Cardiac septum (tissue), 1 donor: ENCODE measurements at regions of chr12 and their contacts with region 1.

Region 1: GRCh38 chr12:94149119-94149780 is 873 bp downstream of the PLXNC1 start:
- DNase-seq: peak; percentile 81

Region 2: GRCh38 chr12:93990832-93991803 is 158.1 kb before region 1 on chr12:
- intact Hi-C with region 1: no loop called
- DNase-seq: no peak

Region 3: GRCh38 chr12:94074980-94075928 is 74.0 kb before region 1 on chr12:
- intact Hi-C with region 1: no loop called
- DNase-seq: no peak

Region 4: DNA sequence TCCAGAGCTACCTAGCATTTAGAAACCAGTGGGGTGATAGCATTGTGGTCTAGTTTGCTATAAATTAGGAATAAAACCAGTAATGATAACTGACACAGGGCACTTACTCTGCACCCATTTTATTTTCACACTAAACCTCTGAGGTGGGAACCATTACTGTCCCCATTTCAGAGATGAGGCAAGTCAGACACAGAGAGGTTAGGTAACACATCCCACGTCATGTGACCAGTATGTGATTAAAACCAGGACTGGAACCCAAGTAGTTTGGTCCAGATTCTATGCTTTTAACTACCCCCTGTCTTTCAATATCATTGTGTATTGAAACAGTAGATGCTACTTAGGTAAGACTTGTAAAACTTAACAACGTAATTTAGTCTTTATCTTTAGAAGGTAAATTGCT is 109.3 kb after region 1 on chr12:
- intact Hi-C with region 1: loop called (anchors 5 kb)
- DNase-seq: no peak

Region 5: DNA sequence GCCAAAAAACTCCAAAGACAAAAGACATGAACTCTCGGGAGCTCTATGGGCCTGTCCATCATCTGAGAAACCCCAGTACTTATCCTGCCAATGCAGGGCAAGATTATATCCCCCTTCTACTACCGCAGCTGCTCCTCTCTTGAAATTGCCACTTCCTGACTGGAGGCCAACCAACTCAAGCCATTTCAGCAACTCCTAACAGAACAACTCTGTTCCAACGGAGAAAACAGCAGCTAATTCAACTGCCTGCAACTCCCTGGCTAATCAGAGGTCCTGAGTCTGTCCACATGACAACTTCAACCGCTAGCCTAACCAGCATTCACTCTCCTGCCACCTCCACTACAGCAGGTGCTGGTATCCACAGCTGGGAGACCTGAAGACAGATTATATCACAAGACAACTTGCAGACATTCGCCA is 286.3 kb after region 1 on chr12:
- intact Hi-C with region 1: loop called (anchors 2 kb)
- DNase-seq: no peak

Region 6: GRCh38 chr12:94532490-94533422 is 383.5 kb after region 1 on chr12:
- intact Hi-C with region 1: loop called (anchors 5 kb)
- DNase-seq: peak; percentile 77

Region 7: DNA sequence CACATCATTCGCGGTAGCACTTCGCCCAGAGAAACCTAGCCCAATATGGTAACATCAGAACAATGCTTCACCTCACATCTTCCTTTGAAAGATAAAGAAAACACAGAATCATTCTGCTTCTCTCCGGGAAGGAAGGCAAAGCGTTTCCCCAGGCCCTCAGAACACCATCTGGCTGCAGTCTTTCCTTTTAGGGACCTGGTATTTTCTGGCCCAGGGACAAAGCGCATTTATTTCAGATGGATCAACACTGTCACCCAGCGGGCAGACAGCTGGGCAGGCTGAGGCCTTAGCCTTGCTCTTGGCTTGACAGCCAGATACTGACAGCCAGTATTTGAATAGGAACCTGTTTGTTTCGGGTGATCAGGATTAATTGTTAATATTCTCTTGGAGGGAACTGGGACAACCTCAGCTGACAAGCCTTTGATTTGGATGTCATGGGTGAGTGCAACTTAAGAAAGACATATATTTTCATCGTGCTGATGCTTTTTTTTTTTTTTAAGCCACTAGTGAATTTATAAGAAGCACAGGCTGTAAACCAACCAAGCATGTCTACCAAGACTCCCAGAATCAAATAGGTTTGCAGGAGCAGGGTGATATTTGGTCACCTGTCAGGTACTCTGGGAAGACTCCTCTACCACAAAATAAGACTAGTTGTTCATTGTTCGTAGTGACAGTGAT is 1187.3 kb after region 1 on chr12:
- intact Hi-C with region 1: loop called (anchors 5 kb)
- DNase-seq: peak; percentile 83